Right ventricle myocardium inferior (tissue), 1 donor: ENCODE measurements at regions of chr11 and their contacts with region 1.

Region 1: DNA sequence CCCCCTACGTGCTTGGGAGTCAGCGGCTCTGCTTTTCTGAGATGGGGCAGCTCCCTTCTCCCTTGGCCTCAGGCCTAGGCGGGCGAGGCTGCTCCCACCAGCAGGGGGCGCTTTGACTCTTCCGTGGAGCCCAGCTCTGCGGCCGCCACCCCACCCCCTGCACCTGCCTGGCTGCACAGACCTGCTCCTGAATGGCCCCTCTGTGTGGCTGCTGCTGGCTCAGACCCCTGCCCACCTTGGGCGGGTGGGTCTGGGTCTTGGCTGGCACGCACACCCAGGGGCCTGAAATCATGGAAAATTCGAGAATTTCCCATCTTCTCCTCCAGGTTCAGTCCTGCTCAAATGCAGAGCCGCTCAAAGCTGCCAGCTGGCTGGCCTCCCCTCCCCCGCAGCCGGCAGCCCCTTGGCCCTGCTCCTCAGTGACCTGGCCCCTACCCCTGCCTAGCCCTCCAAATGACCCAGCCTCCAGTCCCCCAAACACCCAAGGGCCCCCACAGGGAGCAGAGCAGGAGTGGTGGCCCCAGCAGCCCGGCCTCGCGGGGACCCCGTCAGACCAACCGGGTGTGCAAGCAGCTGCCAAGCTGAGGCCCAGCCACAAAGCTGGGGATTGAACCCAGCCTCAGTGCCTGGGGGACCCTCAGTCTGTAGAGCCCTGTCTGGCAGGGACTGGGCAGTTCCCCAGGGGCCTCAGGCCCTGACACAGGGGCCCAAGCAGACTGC is 9.0 kb downstream of the PRR33 start:
- DNase-seq: peak; percentile 93
- ATAC-seq: peak; percentile 67

Region 2: DNA sequence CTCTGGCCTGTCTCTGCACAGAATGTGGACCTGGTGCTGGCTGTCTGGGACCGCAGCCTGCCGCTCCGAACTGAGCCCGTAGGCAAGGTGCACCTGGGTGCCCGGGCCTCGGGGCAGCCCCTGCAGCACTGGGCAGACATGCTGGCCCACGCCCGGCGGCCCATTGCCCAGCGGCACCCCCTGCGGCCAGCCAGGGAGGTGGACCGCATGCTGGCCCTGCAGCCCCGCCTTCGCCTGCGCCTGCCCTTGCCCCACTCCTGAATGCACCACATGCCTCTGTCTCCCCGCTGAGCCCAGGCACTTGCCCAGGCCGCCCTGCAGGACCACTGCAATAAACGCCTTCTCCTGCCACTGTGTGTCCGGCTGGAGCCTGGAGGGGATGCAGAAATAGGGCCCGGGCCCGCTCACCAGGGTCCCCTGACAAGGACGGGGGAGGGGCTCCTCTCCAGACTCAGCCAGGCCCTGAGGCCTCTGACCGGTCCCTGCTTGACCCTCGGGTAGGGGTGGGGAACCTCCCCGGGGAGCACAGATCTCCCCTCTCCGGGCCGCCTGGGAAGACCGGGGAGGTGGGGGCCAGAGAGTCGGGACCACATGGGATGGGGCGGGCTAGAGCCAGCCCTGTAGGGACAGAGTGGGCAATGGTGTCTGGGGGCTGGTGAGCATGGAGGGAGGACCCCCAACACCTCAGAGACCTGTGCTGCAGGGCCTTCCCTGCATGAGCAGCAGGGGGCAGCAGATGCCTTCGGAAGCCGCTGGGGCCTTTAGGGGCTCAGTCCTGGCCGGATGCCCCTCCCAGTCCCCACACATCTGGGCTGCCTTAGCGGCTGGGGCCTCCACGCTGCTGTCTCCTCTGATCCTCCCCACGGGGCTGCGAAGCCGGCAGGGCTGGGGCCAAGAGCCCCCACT is 45.3 kb before region 1 on chr11:
- intact Hi-C with region 1: loop called (anchors 2 kb)
- DNase-seq: peak; percentile 81
- ATAC-seq: peak; percentile 60

Region 3: DNA sequence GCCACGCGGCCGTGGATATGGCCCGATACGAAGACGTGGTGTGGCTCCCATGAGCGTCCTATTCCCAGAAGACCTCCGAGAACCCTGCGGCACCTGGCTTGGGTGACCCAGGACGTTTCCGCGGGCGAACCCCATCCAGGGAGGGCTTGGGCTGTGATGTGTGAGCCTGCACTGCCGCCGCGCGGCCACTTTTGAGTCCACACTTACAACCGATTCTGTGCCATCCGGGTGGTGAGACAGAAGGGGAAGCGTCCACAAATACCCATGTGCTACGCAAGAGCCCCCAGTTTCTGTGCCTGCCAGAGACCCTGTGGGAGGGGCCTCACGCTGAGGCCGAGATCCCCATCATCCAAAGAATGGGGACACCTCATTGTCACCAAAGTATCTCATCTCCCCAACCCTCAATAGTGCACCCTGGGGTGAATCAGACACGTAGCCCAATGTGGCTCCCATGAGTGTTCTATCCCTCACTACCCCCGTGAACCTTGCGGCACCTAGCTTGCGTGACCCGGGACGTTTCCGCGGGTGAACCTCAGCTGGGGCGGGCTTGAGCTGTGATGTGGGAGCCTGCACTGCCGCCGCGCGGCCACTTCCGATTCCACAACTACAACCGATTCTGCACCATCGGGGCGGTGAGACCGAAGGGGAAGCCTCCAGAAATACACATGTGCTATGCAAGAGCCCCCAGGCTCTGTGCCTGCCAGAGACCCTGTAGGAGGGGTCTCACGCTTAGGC is 119.5 kb after region 1 on chr11:
- intact Hi-C with region 1: no loop called
- DNase-seq: no peak
- ATAC-seq: no peak

Region 4: DNA sequence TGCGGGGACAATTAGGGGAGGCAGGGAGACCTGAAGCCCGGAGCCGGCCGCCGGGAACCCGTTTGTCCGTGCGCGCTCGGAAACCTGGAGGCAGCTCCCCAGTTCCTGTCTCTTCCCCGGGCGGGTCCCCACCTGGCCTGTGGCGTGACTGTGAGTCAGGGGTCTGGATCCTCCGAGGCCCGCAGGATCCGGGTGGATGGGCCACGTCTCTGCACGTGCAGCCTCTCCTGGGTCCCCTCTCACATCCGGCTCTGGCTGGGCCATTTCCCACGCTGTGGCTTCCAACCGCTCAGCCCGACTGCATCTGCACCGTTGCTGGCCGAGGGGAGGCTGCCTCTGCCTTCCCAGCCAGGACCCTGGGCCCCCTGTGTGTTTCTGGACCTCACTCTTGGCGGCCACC is 129.8 kb after region 1 on chr11:
- intact Hi-C with region 1: no loop called
- DNase-seq: no peak
- ATAC-seq: no peak